ENCODE measurements at regions of chr3 and their contacts with region 1.

Region 1: DNA sequence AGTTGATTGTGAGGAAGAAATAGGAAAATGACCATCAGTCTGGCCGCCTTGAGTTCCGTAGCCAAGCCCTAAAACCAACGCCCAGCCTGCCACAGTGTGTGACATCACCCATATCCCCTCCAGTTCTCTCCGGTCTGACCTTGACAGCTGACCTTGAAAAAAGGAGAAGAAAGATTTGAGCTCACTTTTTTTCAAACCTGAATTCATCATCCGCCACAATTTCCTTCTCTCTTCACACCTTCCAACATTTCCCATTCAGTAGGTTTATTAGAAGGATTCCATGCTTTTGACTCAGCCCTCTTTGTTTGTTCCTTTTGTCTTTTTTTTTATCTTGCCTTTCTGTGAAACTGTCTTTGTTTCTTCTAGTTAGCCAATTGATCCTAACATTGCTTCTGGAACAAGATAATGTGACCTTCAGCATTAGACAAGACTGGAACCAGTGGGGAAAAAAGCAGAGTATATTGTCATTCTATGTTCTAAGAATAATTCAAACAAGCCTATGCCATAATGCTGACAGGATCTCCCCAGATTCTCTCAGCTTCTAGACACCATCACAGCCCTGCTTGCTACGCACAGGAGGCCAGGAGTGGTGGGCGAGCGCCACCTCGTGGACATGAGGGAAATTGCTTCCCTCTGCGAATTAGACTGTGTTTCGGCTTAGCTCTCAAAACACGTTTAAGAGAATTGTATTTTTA is 283.1 kb downstream of the FGF12 start:
- DNase-seq: peak; percentile 47 to 84 (median 69)
- ATAC-seq: peak; percentile 95
- H3K4me3 ChIP-seq: no peak overlapping the region
- H3K27ac ChIP-seq: no peak overlapping the region
- H3K4me1 ChIP-seq: no peaks in the 10 kb centered on the region
- H3K27me3 ChIP-seq: peaks cover 0 to 50% of the 10 kb centered on the region in 2 donors
- CTCF ChIP-seq: peak; percentile 74 to 96

Region 2: DNA sequence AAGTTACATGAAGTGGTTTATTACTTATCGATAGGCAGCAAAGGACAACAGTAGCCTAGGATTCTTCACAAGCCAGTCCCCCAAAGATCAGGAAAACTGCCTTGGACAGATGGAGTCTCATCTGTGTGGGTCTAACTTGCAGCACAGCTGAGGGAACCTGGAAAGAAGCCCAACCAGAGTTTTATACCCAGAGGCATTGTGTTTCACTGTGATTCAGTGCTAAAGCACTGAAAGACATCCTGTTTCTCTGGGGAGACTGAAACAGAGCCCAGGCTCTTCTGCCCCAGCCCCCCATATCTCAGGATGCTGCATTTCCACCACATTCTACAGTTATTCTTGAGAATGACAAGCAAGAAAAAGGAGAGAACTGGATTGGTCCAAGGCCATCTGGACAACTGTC is 1031.5 kb before region 1 on chr3:
- intact Hi-C with region 1: loop called in 1 of 2 experiments (anchors 10 kb)
- DNase-seq: no peak
- ATAC-seq: no peak
- H3K4me3 ChIP-seq: no peak overlapping the region
- H3K27ac ChIP-seq: no peak overlapping the region
- H3K4me1 ChIP-seq: no peaks in the 10 kb centered on the region
- H3K27me3 ChIP-seq: no peaks in the 10 kb centered on the region
- CTCF ChIP-seq: no peak

Region 3: GRCh38 chr3:192130534-192131132 is 313.6 kb before region 1 on chr3:
- intact Hi-C with region 1: loop called in 1 of 2 experiments (anchors 10 kb)
- DNase-seq: peak in 2 of 4 donors; percentile 30 to 41
- ATAC-seq: peak; percentile 85
- H3K4me3 ChIP-seq: no peak overlapping the region
- H3K27ac ChIP-seq: no peak overlapping the region
- H3K4me1 ChIP-seq: no peaks in the 10 kb centered on the region
- H3K27me3 ChIP-seq: no peaks in the 10 kb centered on the region
- CTCF ChIP-seq: peak; percentile 61 to 67